GM12878 (cell line): ENCODE measurements at regions of chr13 and their contacts with region 1.

Region 1: GRCh38 chr13:46603165-46603603 is 50.2 kb downstream of the LRCH1 start:
- DNase-seq: no peak
- ATAC-seq: no peak
- H3K4me3 ChIP-seq: no peak overlapping the region
- H3K27ac ChIP-seq: no peak overlapping the region
- H3K4me1 ChIP-seq: peaks cover 47% of the 10 kb centered on the region
- H3K27me3 ChIP-seq: no peaks in the 10 kb centered on the region
- CTCF ChIP-seq: peak; percentile 28 to 38 (median 36); a peak in 3 of 6 replicates
- EP300 ChIP-seq: no peak
- POLR2A ChIP-seq: no peak
- RAD21 ChIP-seq: peak; percentile 48

Region 2: DNA sequence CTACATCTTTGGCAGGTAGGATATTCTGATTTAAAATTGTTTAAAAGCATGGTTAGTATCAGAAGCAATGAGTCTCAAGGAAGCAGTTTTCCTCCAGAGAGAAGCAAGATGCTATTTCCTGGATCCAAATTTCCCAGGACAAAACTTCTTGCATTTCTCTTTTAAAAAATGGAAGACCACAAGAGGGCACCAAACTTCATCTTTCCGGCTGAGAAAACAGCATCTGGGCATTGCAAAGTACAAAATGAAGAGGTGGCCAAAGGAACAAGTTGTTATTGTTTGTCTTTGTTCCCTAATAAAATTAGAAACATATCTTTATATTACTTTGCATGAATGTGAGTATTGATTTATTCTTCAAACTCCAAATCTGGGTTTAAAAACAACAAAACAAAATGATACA is 110.2 kb before region 1 on chr13:
- CTCF ChIA-PET with region 1: no interaction called
- POLR2A ChIA-PET with region 1: no interaction called
- RAD21 ChIA-PET with region 1: no interaction called
- SMC1A ChIA-PET with region 1: interaction called, 11 read pairs
- in situ Hi-C with region 1: no loop called
- intact Hi-C with region 1: no loop called
- DNase-seq: no peak
- ATAC-seq: peak; percentile 64
- H3K4me3 ChIP-seq: no peak overlapping the region
- H3K27ac ChIP-seq: no peak overlapping the region
- H3K4me1 ChIP-seq: peaks cover 3% of the 10 kb centered on the region; the same call in 1 of the 2 replicates
- H3K27me3 ChIP-seq: no peaks in the 10 kb centered on the region
- CTCF ChIP-seq: peak; percentile 45 to 73 (median 53); a peak in 5 of 6 replicates
- EP300 ChIP-seq: no peak
- POLR2A ChIP-seq: no peak
- RAD21 ChIP-seq: peak; percentile 93

Region 3: GRCh38 chr13:46587807-46588418 is 15.3 kb before region 1 on chr13:
- CTCF ChIA-PET with region 1: interaction called, 19 read pairs
- POLR2A ChIA-PET with region 1: interaction called, 14 read pairs
- RAD21 ChIA-PET with region 1: interaction called, 97 read pairs
- SMC1A ChIA-PET with region 1: interaction called, 367 read pairs
- in situ Hi-C with region 1: no loop called
- intact Hi-C with region 1: no loop called
- DNase-seq: no peak
- ATAC-seq: peak; percentile 79
- H3K4me3 ChIP-seq: 0 out of 2 replicates have a peak overlapping the region, but pooled peaks have one; percentile 7
- H3K27ac ChIP-seq: peak overlapping the region; percentile 29
- H3K4me1 ChIP-seq: peaks cover 58% of the 10 kb centered on the region
- H3K27me3 ChIP-seq: no peaks in the 10 kb centered on the region
- CTCF ChIP-seq: no peak
- EP300 ChIP-seq: peak in 1 of 2 experiments; percentile 56; a peak in 2 of 4 replicates
- POLR2A ChIP-seq: no peak
- RAD21 ChIP-seq: no peak

Region 4: GRCh38 chr13:46633416-46633815 is 30.2 kb after region 1 on chr13:
- CTCF ChIA-PET with region 1: interaction called, 5 read pairs
- POLR2A ChIA-PET with region 1: interaction called, 6 read pairs
- RAD21 ChIA-PET with region 1: interaction called, 15 read pairs
- SMC1A ChIA-PET with region 1: interaction called, 22 read pairs
- in situ Hi-C with region 1: no loop called
- intact Hi-C with region 1: no loop called
- DNase-seq: no peak
- ATAC-seq: no peak
- H3K4me3 ChIP-seq: no peak overlapping the region
- H3K27ac ChIP-seq: no peak overlapping the region
- H3K4me1 ChIP-seq: peaks cover 18% of the 10 kb centered on the region
- H3K27me3 ChIP-seq: no peaks in the 10 kb centered on the region
- CTCF ChIP-seq: no peak
- EP300 ChIP-seq: no peak
- POLR2A ChIP-seq: no peak
- RAD21 ChIP-seq: no peak

Region 5: DNA sequence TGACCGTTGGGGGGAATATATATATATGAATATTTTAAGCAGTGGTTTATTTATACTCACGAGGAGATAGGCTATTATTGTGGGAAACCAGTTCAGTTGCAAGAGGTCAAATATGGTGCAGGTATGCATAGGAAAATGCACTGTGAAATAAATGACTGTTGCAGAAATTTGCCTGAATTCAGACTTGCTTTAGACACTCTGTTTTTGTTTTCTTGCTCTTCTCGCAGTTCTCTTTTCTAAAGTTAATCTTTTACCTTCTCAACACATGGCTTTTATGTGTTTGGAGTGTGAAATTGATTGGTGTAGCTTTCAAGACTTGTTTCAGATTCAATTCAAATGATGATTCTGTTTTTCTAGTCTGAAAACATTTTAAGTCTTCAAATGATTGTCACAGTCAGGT is 59.5 kb after region 1 on chr13:
- CTCF ChIA-PET with region 1: interaction called, 7 read pairs
- POLR2A ChIA-PET with region 1: interaction called, 5 read pairs
- RAD21 ChIA-PET with region 1: interaction called, 6 read pairs
- SMC1A ChIA-PET with region 1: interaction called, 95 read pairs
- in situ Hi-C with region 1: no loop called
- intact Hi-C with region 1: loop called (anchors 5 kb)
- DNase-seq: no peak
- ATAC-seq: peak; percentile 70
- H3K4me3 ChIP-seq: no peak overlapping the region
- H3K27ac ChIP-seq: peak overlapping the region; percentile 51; the same call in 1 of the 2 replicates
- H3K4me1 ChIP-seq: peaks cover 47% of the 10 kb centered on the region
- H3K27me3 ChIP-seq: no peaks in the 10 kb centered on the region
- CTCF ChIP-seq: no peak
- EP300 ChIP-seq: peak in 1 of 2 experiments; percentile 59; a peak in 2 of 4 replicates
- POLR2A ChIP-seq: no peak
- RAD21 ChIP-seq: no peak

Region 6: GRCh38 chr13:46679369-46680120 is 76.4 kb after region 1 on chr13:
- CTCF ChIA-PET with region 1: interaction called, 4 read pairs
- POLR2A ChIA-PET with region 1: interaction called, 4 read pairs
- RAD21 ChIA-PET with region 1: interaction called, 13 read pairs
- SMC1A ChIA-PET with region 1: interaction called, 5 read pairs
- in situ Hi-C with region 1: no loop called
- intact Hi-C with region 1: loop called (anchors 2 kb)
- DNase-seq: peak; percentile 53
- ATAC-seq: peak; percentile 91
- H3K4me3 ChIP-seq: peak overlapping the region; percentile 56
- H3K27ac ChIP-seq: peak overlapping the region; percentile 83
- H3K4me1 ChIP-seq: peaks cover 37% of the 10 kb centered on the region
- H3K27me3 ChIP-seq: no peaks in the 10 kb centered on the region
- CTCF ChIP-seq: peak; percentile 13 to 44 (median 25); a peak in 4 of 6 replicates
- EP300 ChIP-seq: no peak
- POLR2A ChIP-seq: no peak; the same call in none of the 2 replicates
- RAD21 ChIP-seq: peak; percentile 55